T-cell (primary cell): ENCODE measurements at regions of chr6 and their contacts with region 1.

Region 1: DNA sequence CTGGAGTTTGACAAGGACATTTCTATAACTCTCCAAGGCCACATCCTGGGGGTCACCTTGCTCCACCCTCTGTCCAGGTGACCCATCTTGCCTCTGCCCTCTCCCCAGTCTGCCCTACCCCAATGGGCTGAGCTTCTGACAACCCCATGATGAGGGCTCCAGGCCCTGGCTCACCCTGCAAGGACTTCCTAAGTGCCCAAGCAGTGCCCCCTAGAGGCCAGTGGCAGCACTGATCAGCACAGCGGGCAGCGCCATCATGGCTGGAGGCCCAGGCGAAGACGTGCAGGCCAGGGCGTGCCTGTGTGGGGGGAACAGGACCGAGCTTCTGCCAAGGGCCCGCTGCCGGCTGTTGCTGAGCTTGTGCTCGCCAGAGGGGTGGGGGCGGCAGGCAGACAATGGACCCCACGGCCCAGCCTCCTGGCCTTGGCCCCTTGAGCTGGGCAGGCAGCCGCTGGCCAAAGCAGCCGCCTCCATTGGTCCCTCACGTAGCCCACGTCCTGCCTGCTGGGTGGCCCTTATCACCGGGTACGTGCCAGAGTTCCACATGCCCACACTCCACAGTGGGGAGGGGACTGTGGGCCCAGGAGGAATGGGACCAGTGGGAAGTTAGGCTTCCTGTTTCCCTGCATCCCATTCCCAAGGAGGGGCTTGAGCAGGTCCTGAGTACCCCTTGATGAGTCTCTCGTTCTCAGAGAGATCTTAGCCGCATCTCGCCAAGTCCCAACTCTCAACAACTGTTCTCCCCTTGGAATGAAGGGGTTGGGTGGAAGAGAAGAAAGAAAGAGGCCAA is 64.3 kb downstream of the MRPL14 start:
- DNase-seq: peak in 3 of 35 experiments; percentile 13 to 22 (median 17)
- ATAC-seq: no peak
- H3K4me3 ChIP-seq: no peak overlapping the region
- H3K4me3 Mint-ChIP-seq: no peak overlapping the region
- H3K27ac ChIP-seq: no peak overlapping the region
- H3K27ac Mint-ChIP-seq: no peak overlapping the region
- H3K4me1 ChIP-seq: no peaks in the 10 kb centered on the region
- H3K4me1 Mint-ChIP-seq: no peaks in the 10 kb centered on the region
- H3K27me3 ChIP-seq: peaks cover 0 to 24% of the 10 kb centered on the region in 2 experiments
- H3K27me3 Mint-ChIP-seq: peaks cover 6 to 10% of the 10 kb centered on the region in 2 donors

Region 2: GRCh38 chr6:43764721-43765120 is 298.2 kb before region 1 on chr6:
- CTCF ChIA-PET with region 1: interaction called in 1 of 2 experiments, 11 read pairs
- POLR2A ChIA-PET with region 1: no interaction called
- DNase-seq: no peak
- ATAC-seq: no peak
- H3K4me3 ChIP-seq: no peak overlapping the region
- H3K4me3 Mint-ChIP-seq: no peak overlapping the region
- H3K27ac ChIP-seq: no peak overlapping the region
- H3K27ac Mint-ChIP-seq: no peak overlapping the region
- H3K4me1 ChIP-seq: peaks cover 0 to 7% of the 10 kb centered on the region in 2 experiments
- H3K4me1 Mint-ChIP-seq: peaks cover 0 to 7% (median 5%) of the 10 kb centered on the region in 3 donors
- H3K27me3 ChIP-seq: peaks cover 0 to 27% of the 10 kb centered on the region in 2 experiments
- H3K27me3 Mint-ChIP-seq: peaks cover 0 to 5% of the 10 kb centered on the region in 2 donors